Activated T-helper 1 cell treated with anti-CD3 and anti-CD28 coated beads, Interleukin-12 subunit alpha, Interleukin-12 subunit beta, Interleukin-2, Interleukin-4 antibody, amounts not matched to agents 30 ng/mL and 10 ng/mL and 1 ng/mL, durations not matched to agents 14 hours and 24 hours and 36 hours (primary cell): ENCODE measurements at regions of chr14 and their contacts with region 1.

Region 1: GRCh38 chr14:95515596-95516552 is 576 bp downstream of the SYNE3 start:
- DNase-seq: peak; percentile 86
- H3K4me3 Mint-ChIP-seq: peak overlapping the region; percentile 93
- H3K27ac Mint-ChIP-seq: peak overlapping the region; percentile 94
- H3K4me1 Mint-ChIP-seq: peaks cover 76% of the 10 kb centered on the region
- H3K27me3 Mint-ChIP-seq: no peaks in the 10 kb centered on the region

Region 2: GRCh38 chr14:94392510-94392935 is 1123.4 kb before region 1 on chr14:
- intact Hi-C with region 1: loop called (anchors 5 kb)
- DNase-seq: peak; percentile 42
- H3K4me3 Mint-ChIP-seq: no peak overlapping the region
- H3K27ac Mint-ChIP-seq: peak overlapping the region; percentile 18
- H3K4me1 Mint-ChIP-seq: peaks cover 46% of the 10 kb centered on the region
- H3K27me3 Mint-ChIP-seq: peaks cover 11% of the 10 kb centered on the region

Region 3: DNA sequence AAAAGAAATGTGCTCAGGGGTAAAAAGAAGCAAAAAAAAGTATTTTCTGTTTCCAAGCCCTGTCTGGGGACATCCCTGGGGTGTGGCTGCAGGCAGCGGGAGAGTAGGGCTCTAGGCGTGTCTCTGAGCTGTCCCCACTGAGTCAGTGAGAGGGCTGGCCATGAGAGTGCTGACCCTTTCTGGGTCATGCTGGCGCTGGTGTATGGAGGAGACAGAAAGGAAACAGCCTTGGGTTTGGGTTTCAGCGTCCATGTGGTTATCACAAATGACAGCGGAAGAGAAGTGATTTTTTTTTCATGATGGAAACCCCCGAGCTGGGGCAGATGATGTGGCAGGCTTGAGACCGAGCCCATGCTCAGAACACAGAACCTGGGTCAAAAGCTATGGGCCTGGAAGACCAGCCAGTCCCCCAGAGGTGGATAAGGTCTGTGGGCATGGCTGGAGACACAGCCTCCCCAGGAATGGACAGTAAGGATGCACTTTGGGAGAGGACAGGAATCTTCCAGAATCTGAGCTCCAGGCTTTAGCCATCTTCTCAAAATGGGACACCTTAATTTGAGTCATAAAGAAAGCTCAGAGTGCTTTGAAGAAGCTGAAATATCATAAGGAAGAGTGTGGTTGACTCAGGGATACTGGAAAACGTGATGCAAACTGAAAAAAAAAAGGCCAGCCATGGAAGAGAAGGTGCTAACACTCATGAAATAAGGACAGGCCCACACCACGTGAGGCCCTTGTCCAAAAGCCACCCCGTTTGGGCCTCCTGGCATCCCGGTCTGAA is 35.6 kb before region 1 on chr14:
- intact Hi-C with region 1: loop called (anchors 1 kb)
- DNase-seq: peak; percentile 39
- H3K4me3 Mint-ChIP-seq: peak overlapping the region; percentile 27
- H3K27ac Mint-ChIP-seq: peak overlapping the region; percentile 96
- H3K4me1 Mint-ChIP-seq: peaks cover 33% of the 10 kb centered on the region
- H3K27me3 Mint-ChIP-seq: no peaks in the 10 kb centered on the region

Region 4: GRCh38 chr14:95527387-95528002 is 11.6 kb after region 1 on chr14:
- intact Hi-C with region 1: loop called (anchors 1 kb)
- DNase-seq: no peak
- H3K4me3 Mint-ChIP-seq: peak overlapping the region; percentile 64
- H3K27ac Mint-ChIP-seq: peak overlapping the region; percentile 84
- H3K4me1 Mint-ChIP-seq: peaks cover 78% of the 10 kb centered on the region
- H3K27me3 Mint-ChIP-seq: no peaks in the 10 kb centered on the region

Region 5: GRCh38 chr14:95577067-95577800 is 61.4 kb after region 1 on chr14:
- intact Hi-C with region 1: no loop called
- DNase-seq: no peak
- H3K4me3 Mint-ChIP-seq: no peak overlapping the region
- H3K27ac Mint-ChIP-seq: no peak overlapping the region
- H3K4me1 Mint-ChIP-seq: no peaks in the 10 kb centered on the region
- H3K27me3 Mint-ChIP-seq: peaks cover 6% of the 10 kb centered on the region

Region 6: DNA sequence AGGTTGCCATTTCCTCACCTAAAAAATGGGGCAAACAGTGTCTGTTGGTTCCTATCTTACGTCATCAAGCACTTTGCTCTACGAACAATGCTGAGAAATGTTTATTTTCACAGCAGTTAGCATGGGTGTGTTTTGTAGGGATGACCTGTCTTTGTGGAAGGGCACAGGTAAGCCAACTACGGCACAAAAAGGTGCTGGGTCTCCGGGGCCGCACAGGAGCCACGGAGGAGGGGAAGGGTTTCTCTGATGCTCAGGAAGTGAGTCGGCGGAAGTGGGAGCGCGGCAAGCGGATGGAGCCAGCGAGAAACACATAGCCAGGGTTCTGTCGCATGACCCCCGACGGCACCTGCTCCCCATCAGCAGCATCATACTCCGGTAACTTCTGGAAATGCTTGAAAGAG is 104.8 kb after region 1 on chr14:
- intact Hi-C with region 1: no loop called
- DNase-seq: no peak
- H3K4me3 Mint-ChIP-seq: peak overlapping the region; percentile 29
- H3K27ac Mint-ChIP-seq: no peak overlapping the region
- H3K4me1 Mint-ChIP-seq: no peaks in the 10 kb centered on the region
- H3K27me3 Mint-ChIP-seq: peaks cover 2% of the 10 kb centered on the region

Region 7: GRCh38 chr14:96362965-96363756 is 847.3 kb after region 1 on chr14 and contains the starts of genes ATG2B and GSKIP:
- intact Hi-C with region 1: loop called (anchors 5 kb)
- DNase-seq: peak; percentile 97
- H3K4me3 Mint-ChIP-seq: peak within 1 kb of the TSS; percentile 98
- H3K27ac Mint-ChIP-seq: peak within 1 kb of the TSS; percentile 97
- H3K4me1 Mint-ChIP-seq: peaks cover 55% of the 10 kb centered on the region
- H3K27me3 Mint-ChIP-seq: no peaks in the 10 kb centered on the region
- total RNA-seq, gene ATG2B: 22.2 and 27.7 TPM in 2 replicates
- total RNA-seq, gene GSKIP: 22.7 and 23.7 TPM in 2 replicates